Activated CD4-positive, alpha-beta memory T cell treated with anti-CD3 and anti-CD28 coated beads for 36 hours (primary cell): ENCODE measurements at regions of chr12 and their contacts with region 1.

Region 1: GRCh38 chr12:116703214-116703795 is 34.6 kb downstream of the SPRING1 start:
- DNase-seq: peak; percentile 73
- H3K4me3 Mint-ChIP-seq: no peak overlapping the region
- H3K27ac Mint-ChIP-seq: no peak overlapping the region
- H3K4me1 Mint-ChIP-seq: peaks cover 2% of the 10 kb centered on the region
- H3K27me3 Mint-ChIP-seq: peaks cover 2% of the 10 kb centered on the region

Region 2: DNA sequence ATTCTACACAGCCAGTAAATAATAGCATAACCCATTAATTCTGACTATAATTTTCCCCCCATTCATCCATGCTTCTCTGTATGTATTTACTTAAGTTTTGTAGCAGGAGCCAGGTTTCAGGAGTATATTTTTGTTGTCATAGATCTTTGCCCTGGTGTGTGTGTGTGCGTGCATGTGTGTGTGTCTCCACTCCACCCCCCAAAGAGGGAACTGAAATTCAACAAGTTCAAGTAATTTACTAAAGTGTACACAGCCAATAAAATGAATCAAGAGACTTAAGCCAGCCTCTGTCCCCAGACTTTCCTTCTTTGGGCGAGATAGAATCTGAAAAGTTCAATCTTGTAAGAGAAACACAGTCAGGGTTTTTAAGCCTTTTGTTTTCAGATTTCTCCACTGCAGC is 1217.8 kb before region 1 on chr12:
- CTCF ChIA-PET with region 1: no interaction called
- POLR2A ChIA-PET with region 1: no interaction called
- intact Hi-C with region 1: no loop called
- DNase-seq: no peak
- H3K4me3 Mint-ChIP-seq: no peak overlapping the region
- H3K27ac Mint-ChIP-seq: no peak overlapping the region
- H3K4me1 Mint-ChIP-seq: no peaks in the 10 kb centered on the region
- H3K27me3 Mint-ChIP-seq: no peaks in the 10 kb centered on the region

Region 3: DNA sequence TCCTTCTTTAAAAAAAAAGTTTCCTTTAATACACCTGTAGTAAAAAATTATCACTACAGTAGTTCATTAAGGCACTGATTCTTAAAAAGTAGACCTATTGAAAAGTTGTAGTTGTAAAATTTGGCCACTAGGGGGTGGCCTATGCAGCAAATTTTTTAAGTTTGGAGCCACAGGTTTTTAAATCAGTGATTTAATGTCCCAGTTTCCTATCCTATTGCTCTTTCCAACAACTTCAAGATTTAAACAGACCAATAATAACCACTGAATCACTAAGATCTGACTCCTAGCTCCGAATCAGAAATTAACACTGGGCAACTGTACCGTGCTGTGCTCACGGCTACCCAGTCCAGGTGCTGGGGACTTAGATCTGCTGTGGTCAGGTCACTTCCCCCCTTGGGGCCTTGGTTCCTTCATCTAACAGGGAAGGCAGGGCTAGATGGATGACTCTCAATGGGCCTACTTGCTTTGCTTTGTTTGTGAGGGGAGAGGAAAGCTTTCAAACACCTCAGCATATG is 705.1 kb before region 1 on chr12:
- CTCF ChIA-PET with region 1: interaction called, 5 read pairs
- POLR2A ChIA-PET with region 1: no interaction called
- intact Hi-C with region 1: loop called (anchors 10 kb)
- DNase-seq: peak; percentile 13
- H3K4me3 Mint-ChIP-seq: no peak overlapping the region
- H3K27ac Mint-ChIP-seq: no peak overlapping the region
- H3K4me1 Mint-ChIP-seq: peaks cover 4% of the 10 kb centered on the region
- H3K27me3 Mint-ChIP-seq: no peaks in the 10 kb centered on the region

Region 4: GRCh38 chr12:116520801-116521471 is 182.4 kb before region 1 on chr12:
- CTCF ChIA-PET with region 1: no interaction called
- POLR2A ChIA-PET with region 1: no interaction called
- intact Hi-C with region 1: no loop called
- DNase-seq: peak; percentile 28
- H3K4me3 Mint-ChIP-seq: no peak overlapping the region
- H3K27ac Mint-ChIP-seq: no peak overlapping the region
- H3K4me1 Mint-ChIP-seq: peaks cover 5% of the 10 kb centered on the region
- H3K27me3 Mint-ChIP-seq: peaks cover 3% of the 10 kb centered on the region

Region 5: GRCh38 chr12:116726694-116727093 is 23.4 kb after region 1 on chr12:
- CTCF ChIA-PET with region 1: interaction called, 13 read pairs
- POLR2A ChIA-PET with region 1: no interaction called
- intact Hi-C with region 1: no loop called
- DNase-seq: no peak
- H3K4me3 Mint-ChIP-seq: no peak overlapping the region
- H3K27ac Mint-ChIP-seq: no peak overlapping the region
- H3K4me1 Mint-ChIP-seq: peaks cover 29% of the 10 kb centered on the region
- H3K27me3 Mint-ChIP-seq: no peaks in the 10 kb centered on the region

Region 6: DNA sequence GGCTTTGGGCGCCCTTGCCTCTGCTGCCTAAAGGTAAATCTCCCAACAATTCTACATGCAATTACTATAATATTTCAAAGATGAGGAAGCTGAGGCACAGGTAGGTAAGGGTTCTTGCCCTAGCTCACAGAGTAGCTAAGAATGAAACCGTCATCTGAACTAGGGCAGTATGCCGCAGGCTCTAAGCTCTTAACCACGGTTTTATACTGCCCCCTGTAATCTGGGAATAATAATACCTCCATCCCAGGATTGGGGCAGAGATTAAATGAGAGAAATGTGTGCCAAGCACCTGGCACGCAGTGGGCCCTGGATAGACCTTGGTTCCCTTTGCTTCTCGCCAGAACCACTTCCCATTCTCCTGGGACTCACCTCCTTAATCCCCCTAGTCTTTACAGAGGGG is 179.4 kb after region 1 on chr12:
- CTCF ChIA-PET with region 1: interaction called, 11 read pairs
- POLR2A ChIA-PET with region 1: no interaction called
- intact Hi-C with region 1: no loop called
- DNase-seq: no peak
- H3K4me3 Mint-ChIP-seq: no peak overlapping the region
- H3K27ac Mint-ChIP-seq: no peak overlapping the region
- H3K4me1 Mint-ChIP-seq: peaks cover 34% of the 10 kb centered on the region
- H3K27me3 Mint-ChIP-seq: peaks cover 60% of the 10 kb centered on the region

Region 7: DNA sequence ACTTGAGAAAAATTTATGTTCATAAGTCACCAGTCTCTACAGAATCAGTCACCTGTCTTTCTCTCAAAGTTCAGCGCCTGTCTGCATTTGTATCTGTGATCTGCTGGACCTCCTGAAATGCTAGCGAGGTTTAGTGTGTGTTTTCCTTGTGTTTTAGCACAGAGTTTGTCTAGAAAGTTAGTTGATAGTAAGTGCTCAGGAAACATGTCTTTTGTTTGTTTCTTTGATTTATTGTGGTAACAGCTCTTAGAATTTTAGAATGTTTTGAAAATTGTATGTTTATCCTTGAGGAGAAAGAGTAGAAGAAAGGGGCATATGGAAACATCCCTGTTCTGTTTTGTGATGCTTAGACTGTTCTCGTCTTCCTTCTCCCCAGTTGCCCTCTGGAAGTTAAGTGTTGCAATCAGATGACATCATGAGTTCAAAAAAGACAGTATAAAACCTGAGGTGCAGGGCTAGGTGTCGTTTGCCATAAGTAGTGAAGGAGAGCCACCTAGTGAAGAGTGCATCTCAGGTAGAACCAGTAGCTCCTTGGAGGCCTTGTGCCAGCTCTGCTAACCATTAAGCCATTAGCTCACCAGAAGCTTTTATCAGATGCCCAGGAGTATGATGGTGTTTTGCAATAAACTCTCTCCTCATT is 252.2 kb after region 1 on chr12:
- CTCF ChIA-PET with region 1: interaction called, 16 read pairs
- POLR2A ChIA-PET with region 1: no interaction called
- intact Hi-C with region 1: loop called (anchors 5 kb)
- DNase-seq: peak; percentile 12
- H3K4me3 Mint-ChIP-seq: no peak overlapping the region
- H3K27ac Mint-ChIP-seq: no peak overlapping the region
- H3K4me1 Mint-ChIP-seq: peaks cover 20% of the 10 kb centered on the region
- H3K27me3 Mint-ChIP-seq: no peaks in the 10 kb centered on the region

Region 8: GRCh38 chr12:117025481-117026151 is 322.3 kb after region 1 on chr12:
- CTCF ChIA-PET with region 1: interaction called, 5 read pairs
- POLR2A ChIA-PET with region 1: no interaction called
- intact Hi-C with region 1: loop called (anchors 10 kb)
- DNase-seq: peak; percentile 60
- H3K4me3 Mint-ChIP-seq: no peak overlapping the region
- H3K27ac Mint-ChIP-seq: peak overlapping the region; percentile 45
- H3K4me1 Mint-ChIP-seq: peaks cover 1% of the 10 kb centered on the region
- H3K27me3 Mint-ChIP-seq: no peaks in the 10 kb centered on the region

Region 9: DNA sequence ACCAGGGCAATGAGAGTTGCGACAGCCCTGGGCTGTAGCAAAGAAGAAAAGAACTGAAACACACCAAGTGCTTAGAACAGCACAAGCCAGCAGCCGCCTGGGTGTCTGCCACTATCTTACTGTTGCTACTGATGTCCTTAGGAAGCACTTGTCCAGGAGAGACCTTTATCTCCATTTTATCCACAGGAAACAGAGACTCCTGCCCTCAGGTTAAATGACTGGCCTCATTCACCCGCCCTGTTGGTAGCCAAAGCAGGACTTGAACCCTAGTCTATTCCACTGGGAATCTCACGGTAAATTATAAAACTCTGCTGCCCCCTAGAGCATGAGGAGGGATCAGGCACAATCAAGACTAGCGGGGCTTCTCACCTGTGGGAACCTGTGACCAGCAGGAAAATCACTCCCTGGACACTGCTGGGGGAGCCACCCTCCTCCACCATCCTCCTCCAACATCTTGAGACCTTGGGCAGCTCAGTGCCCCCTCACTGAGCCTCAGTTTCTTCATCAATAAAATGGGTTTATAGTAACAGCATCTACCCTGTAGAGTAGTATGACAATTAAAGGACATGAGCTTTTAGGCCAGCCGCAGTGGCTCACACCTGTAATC is 416.4 kb after region 1 on chr12:
- CTCF ChIA-PET with region 1: interaction called, 16 read pairs
- POLR2A ChIA-PET with region 1: no interaction called
- intact Hi-C with region 1: loop called (anchors 1 kb)
- DNase-seq: peak; percentile 33
- H3K4me3 Mint-ChIP-seq: no peak overlapping the region
- H3K27ac Mint-ChIP-seq: no peak overlapping the region
- H3K4me1 Mint-ChIP-seq: no peaks in the 10 kb centered on the region
- H3K27me3 Mint-ChIP-seq: no peaks in the 10 kb centered on the region